Aorta (tissue), 5 donors: ENCODE measurements at regions of chr6 and their contacts with region 1.

Region 1: DNA sequence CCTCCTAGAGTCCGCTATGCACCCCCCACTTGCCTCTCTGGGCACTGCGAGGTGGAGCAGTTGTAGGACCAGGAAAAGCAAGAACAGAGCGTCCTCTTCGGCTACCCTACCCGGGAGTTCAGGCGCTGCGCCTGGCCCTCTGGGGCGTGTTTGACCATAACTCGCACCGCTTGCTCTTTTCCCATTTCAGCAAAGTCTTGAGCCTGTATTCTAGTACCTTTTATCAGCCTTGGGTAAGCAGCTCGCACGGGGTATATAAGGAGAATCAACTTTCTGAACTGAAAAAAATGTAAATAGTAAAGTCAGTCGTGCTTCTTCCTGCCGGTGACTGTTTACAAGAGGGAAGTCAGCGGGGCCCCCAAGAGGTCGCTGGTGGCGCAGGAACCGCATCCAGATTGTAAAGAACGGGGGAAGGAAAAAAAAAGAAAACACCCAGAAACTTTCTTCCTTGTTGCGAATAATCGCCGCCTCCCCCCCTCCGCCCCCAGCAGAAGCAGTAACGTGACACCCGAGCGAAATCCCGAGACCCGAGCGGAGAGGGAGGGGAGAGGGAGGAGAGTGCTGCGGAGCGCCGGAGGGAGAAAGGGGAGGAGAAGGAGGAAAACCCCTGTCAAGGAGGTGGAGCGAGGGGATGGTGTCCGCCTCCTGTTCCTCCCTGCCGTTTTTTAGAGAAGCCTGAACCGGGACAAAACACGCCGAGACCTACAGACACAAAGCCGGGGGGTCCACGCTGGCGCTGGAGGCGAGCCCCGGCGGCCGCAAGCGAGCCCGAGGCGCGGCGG is at the start of gene UST:
- DNase-seq: peak; percentile 92 to 93
- ATAC-seq: peak; percentile 92
- H3K4me3 ChIP-seq: peak within 1 kb of the TSS; percentile 58 to 60
- H3K27ac ChIP-seq: peak within 1 kb of the TSS; percentile 63 to 88
- H3K4me1 ChIP-seq: peaks cover 0 to 9% of the 10 kb centered on the region in 2 donors
- H3K27me3 ChIP-seq: no peaks in the 10 kb centered on the region
- total RNA-seq, gene UST: 15.6 to 21.5 TPM

Region 2: DNA sequence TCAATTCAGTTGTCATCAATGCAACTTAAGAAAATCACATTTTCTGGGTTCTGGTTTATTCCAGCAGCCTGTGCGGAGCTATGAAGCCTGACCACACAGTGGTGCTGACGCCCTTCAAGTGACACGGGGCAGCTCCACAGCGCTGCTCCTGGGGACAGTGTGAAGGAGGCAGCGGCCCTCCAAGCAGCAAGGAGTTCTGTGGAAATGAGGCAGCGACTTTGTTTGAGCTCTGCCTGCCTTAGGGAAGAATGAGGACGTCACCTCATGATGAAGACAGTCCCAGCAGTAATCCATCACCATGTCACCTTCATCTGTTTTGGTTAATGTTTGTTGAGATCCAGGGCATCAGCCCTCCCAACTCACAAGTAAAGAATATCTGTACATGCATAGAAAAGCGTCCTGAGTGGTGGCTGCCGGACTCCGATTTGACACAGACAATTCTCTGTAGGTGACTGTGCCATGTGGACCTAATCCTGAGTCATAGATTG is 168.3 kb before region 1 on chr6:
- intact Hi-C with region 1: loop called (anchors 10 kb)
- DNase-seq: peak; percentile 89 to 92
- ATAC-seq: peak; percentile 95
- H3K4me3 ChIP-seq: no peak overlapping the region
- H3K27ac ChIP-seq: no peak overlapping the region
- H3K4me1 ChIP-seq: peaks cover 0 to 2% of the 10 kb centered on the region in 2 donors
- H3K27me3 ChIP-seq: peaks cover 0 to 4% of the 10 kb centered on the region in 2 donors

Region 3: DNA sequence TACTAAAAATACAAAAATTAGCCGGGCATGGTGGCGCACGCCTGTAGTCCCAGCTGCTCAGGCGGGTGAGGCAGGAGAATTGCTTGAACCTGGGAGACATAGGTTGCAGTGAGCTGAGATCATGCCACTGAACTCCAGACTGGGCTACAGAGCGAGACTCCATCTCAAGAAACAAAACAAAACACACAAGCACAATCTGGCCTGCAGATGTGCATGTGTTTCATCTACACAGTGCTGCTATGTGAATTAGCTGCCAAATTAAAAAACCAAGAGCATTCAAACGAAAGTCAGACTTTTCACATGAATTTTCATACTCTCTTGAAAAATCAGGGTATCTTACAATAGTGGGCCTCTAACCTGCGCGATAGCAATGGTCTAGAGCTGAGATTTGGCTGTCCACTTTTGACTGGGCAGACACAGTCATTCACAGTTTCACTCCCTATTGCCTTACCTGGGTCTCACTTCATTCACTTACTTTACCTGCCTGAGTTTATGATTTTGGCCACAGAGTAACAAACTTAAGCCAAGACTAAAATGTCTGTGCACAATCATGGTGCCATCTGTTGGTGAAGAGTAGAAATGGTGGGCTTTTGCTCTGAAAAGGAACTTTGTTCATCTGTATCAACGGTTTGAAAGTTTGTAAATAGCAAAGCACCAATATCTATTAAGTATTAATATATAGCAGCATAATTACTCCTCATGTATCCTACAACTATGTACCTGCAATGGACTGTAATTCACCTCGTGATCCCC is 138.2 kb before region 1 on chr6:
- intact Hi-C with region 1: loop called in 1 of 2 experiments (anchors 5 kb)
- DNase-seq: no peak
- ATAC-seq: no peak
- H3K4me3 ChIP-seq: no peak overlapping the region
- H3K27ac ChIP-seq: no peak overlapping the region
- H3K4me1 ChIP-seq: peaks cover 0 to 10% of the 10 kb centered on the region in 2 donors
- H3K27me3 ChIP-seq: no peaks in the 10 kb centered on the region

Region 4: DNA sequence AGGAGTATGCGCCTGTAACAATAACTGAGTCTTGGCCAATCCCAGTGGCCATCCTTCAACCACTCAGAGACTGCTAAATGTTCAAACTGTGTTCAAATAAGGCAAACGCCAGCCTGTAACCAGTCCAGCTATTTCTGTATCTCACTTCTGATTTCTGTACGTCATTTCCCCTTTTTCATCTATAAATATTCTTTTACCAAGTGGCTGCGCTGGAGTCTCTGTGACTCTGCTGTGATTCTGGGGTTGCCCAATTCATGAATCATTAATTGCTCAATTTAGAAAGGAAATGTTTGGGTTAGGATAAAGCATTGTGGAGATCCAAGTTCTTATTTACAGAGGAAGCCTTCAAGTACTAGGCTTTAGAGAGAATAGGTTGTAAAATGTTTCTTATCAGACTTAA is 89.5 kb before region 1 on chr6:
- intact Hi-C with region 1: loop called in 1 of 2 experiments (anchors 10 kb)
- DNase-seq: peak in 1 of 2 donors; percentile 65
- ATAC-seq: peak; percentile 88
- H3K4me3 ChIP-seq: no peak overlapping the region
- H3K27ac ChIP-seq: peak overlapping the region in 1 of 2 donors; percentile 95
- H3K4me1 ChIP-seq: peaks cover 0 to 1% of the 10 kb centered on the region in 2 donors
- H3K27me3 ChIP-seq: no peaks in the 10 kb centered on the region

Region 5: DNA sequence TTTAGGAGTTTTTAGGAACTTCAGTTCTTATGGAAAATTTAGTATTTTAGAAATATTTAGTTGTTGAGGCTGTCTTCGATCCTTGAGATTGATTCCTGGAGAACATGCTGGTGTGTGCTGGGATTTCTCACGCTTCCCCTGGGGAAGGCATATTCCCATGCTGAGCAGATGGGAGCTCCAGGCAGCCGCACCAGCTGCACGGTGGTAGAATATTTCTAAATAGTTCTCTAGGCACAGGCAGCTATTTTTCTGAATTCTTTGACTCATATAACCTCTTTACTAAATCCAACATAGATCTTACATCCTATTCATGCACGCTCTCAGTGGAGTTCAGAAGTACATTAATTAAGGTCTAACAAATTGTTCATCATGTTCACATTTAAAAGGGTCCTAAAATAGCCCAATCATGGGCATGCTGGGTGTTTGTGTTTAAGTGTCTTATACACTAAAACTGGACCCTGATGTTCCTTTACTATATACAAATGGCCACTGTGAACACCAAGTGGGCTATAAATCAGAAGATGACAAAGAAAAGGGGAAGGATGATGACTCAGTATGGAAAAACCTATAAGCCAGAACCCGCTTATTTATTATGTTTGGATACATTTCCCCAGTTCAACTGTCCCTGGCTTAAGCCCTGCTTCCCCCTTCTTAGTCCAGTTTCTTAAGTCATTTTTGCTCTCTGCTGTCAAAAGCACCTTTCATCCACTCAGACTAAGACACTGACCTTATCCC is 138.7 kb after region 1 on chr6:
- intact Hi-C with region 1: loop called in 1 of 2 experiments (anchors 5 kb)
- DNase-seq: no peak
- ATAC-seq: no peak
- H3K4me3 ChIP-seq: no peak overlapping the region
- H3K27ac ChIP-seq: no peak overlapping the region
- H3K4me1 ChIP-seq: peaks cover 0 to 22% of the 10 kb centered on the region in 2 donors
- H3K27me3 ChIP-seq: no peaks in the 10 kb centered on the region

Region 6: GRCh38 chr6:148947621-148948444 is 201.3 kb after region 1 on chr6:
- intact Hi-C with region 1: loop called (anchors 5 kb)
- DNase-seq: peak; percentile 88 to 92
- ATAC-seq: peak; percentile 94
- H3K4me3 ChIP-seq: no peak overlapping the region
- H3K27ac ChIP-seq: no peak overlapping the region
- H3K4me1 ChIP-seq: peaks cover 0 to 3% of the 10 kb centered on the region in 2 donors
- H3K27me3 ChIP-seq: no peaks in the 10 kb centered on the region

Region 7: GRCh38 chr6:148972481-148972880 is 225.9 kb after region 1 on chr6:
- intact Hi-C with region 1: no loop called
- DNase-seq: no peak
- ATAC-seq: no peak
- H3K4me3 ChIP-seq: no peak overlapping the region
- H3K27ac ChIP-seq: no peak overlapping the region
- H3K4me1 ChIP-seq: peaks cover 0 to 6% of the 10 kb centered on the region in 2 donors
- H3K27me3 ChIP-seq: no peaks in the 10 kb centered on the region